ENCODE measurements at regions of chr10 and their contacts with region 1.

Region 1: DNA sequence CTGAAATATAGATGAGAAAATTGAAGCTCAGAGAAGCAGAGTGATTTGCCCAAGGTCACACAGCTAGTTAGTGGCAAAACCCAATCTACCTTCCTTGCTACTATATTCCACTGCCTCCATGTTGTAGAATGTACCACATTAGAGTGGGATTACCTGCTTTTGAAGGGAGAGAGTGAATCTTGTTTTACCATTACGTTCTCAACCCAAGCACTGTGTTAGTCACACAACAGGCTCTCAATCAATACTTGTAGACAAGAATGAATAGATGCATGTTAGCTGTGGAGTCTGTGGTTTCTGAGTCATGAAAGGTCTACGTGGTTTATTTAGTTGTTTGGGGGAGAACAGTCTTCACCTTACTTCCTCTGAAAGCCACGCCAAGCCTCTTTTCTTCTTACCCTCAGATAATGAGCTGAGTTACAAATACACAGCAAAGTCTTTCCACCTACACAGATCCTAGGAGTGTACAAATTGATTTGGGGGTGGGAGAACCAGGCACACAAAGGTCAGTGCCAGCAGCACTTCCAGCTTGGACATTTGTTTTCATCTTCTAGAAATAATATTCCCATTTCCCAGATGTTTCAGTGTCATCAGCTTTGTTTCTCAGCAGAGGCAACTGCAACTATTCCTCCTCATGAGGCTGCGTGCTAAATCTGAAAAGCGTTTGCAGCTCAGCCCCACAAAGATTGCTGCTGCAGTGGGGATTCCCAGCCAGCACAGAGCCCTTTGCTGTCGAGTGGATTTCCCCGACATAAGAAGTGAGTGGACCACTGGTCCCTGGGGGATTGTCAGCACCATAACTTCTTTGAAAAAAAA is 71.5 kb upstream of the ADO start:
- DNase-seq: peak; percentile 21 to 87 (median 62)
- ATAC-seq: peak; percentile 90 to 92
- H3K4me3 Mint-ChIP-seq: peak overlapping the region in 6 of 10 donors; percentile 16 to 74 (median 52)
- H3K27ac Mint-ChIP-seq: peak overlapping the region in 3 of 10 donors; percentile 80 to 93 (median 81)
- H3K4me1 Mint-ChIP-seq: peaks cover 0 to 12% (median 6%) of the 10 kb centered on the region in 4 donors
- H3K27me3 Mint-ChIP-seq: peaks cover 2 to 33% (median 4%) of the 10 kb centered on the region in 5 donors

Region 2: DNA sequence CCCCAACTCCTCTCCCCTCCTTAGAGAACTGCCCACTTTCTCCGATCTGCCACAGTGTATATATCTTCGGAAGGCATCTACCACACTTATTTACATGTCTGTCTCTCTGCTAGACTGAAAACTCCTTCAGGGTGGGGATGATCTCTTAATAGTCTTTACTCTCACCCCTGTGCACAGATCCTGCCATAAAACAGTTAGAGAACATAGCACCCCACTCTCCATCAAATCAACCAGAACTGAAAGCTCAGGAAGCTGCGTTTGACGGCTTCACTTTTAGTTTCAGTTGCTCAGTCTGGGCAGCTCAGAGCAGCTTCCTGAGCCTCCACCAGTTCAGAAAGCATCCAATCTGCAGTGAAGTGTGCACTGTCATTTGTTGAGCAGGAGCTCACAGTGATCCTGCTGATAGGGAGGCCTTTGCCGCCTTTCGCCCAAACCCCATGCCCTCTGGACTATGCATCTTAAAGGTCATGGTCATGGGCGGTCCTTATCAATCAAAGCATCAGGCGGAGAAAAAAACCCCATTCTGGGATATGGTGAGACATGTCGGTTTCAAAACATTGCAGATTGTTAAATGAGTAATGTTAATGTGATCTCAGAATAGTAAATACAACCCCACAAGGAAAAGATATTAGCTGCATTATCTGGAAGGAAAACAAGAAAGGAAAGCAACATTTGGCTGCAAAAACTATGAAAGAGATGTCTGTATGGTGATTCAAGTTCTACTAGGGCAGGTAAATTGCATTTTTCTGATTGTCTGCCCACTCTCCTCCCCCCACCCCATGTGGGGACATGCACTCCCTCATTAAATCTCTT is 95.6 kb before region 1 on chr10:
- POLR2A ChIA-PET with region 1: interaction called, 16 read pairs
- DNase-seq: peak; percentile 8 to 81 (median 64)
- ATAC-seq: peak; percentile 92 to 93
- H3K4me3 Mint-ChIP-seq: no peak overlapping the region
- H3K27ac Mint-ChIP-seq: no peak overlapping the region
- H3K4me1 Mint-ChIP-seq: peaks cover 2 to 11% (median 6%) of the 10 kb centered on the region in 4 donors
- H3K27me3 Mint-ChIP-seq: no peaks in the 10 kb centered on the region

Region 3: DNA sequence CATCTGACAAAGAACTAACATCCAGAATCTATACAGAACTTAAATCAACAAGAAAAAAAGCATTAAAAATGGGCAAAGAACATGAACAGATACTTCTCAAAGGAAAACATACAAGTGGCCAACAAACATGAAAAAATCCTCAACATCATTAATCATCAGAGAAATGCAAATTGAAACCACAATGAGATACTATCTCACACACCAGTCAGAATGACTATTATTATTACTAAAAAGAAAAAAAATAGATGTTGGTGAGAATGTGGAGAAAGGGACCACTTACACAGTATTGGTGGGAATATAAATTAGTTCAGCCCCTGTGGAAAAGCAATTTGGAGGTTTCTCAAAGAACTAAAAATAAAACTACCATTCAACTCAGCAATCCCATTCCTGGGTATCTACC is 17.7 kb before region 1 on chr10:
- POLR2A ChIA-PET with region 1: no interaction called
- DNase-seq: no peak
- ATAC-seq: no peak
- H3K4me3 Mint-ChIP-seq: no peak overlapping the region
- H3K27ac Mint-ChIP-seq: no peak overlapping the region
- H3K4me1 Mint-ChIP-seq: peaks cover 0 to 6% (median 0%) of the 10 kb centered on the region in 4 donors
- H3K27me3 Mint-ChIP-seq: peaks cover 0 to 4% (median 0%) of the 10 kb centered on the region in 5 donors

Region 4: DNA sequence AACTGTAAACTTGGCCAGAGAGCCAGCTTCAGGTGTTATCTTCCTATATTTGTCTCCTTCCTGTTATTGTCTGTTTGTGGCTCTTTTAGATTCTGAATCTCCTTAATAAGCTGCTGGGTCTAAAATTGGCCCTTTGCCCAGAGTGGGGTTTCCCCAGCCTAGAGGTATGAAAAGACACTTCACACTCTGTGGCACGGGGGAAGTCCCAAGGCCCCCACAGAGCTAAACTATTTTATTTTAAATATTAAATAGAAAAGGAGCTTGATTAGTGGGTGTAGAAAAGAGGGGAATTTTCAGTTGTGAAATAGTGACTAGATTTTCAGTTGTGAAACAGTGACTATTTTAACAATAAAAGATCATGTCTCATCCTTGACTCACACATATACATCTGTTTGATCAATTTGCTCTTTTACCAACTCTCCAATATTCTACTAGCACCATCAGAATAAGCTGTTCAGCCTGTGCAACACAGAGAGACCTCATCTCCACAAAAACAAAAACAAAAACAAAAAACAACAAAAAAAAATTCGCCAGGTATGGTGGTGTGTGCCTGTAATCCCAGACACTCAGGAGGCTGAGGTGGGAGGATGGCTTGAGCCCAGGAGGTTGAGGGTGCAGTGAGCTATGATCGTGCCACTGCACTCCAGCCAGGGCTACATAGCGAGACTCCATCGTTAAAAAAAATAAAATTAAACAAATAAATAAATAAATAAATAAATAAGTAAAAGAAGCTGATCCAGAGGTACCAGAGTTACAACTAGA is 46.6 kb after region 1 on chr10:
- POLR2A ChIA-PET with region 1: interaction called, 10 read pairs
- DNase-seq: peak; percentile 58 to 95 (median 84)
- ATAC-seq: peak; percentile 99
- H3K4me3 Mint-ChIP-seq: peak overlapping the region in 9 of 10 donors; percentile 2 to 61 (median 23)
- H3K27ac Mint-ChIP-seq: peak overlapping the region in 8 of 10 donors; percentile 22 to 86 (median 38)
- H3K4me1 Mint-ChIP-seq: peaks cover 8 to 27% (median 19%) of the 10 kb centered on the region in 4 donors
- H3K27me3 Mint-ChIP-seq: peaks cover 0 to 8% (median 0%) of the 10 kb centered on the region in 5 donors